ENCODE measurements at regions of chr10 and their contacts with region 1.

Region 1: GRCh38 chr10:96321822-96322221 is 17.6 kb downstream of the DNTT start:
- DNase-seq: no peak
- H3K4me3 ChIP-seq: no peak overlapping the region
- CTCF ChIP-seq: no peak

Region 2: GRCh38 chr10:96334616-96335526 is 13.0 kb after region 1 on chr10:
- CTCF ChIA-PET with region 1: interaction called, 18 read pairs
- POLR2A ChIA-PET with region 1: no interaction called
- DNase-seq: no peak
- H3K4me3 ChIP-seq: no peak overlapping the region
- CTCF ChIP-seq: peak; percentile 71

Measured in AG04449 (cell line).